Lower leg skin (tissue), 4 donors: ENCODE measurements at regions of chr9 and their contacts with region 1.

Region 1: DNA sequence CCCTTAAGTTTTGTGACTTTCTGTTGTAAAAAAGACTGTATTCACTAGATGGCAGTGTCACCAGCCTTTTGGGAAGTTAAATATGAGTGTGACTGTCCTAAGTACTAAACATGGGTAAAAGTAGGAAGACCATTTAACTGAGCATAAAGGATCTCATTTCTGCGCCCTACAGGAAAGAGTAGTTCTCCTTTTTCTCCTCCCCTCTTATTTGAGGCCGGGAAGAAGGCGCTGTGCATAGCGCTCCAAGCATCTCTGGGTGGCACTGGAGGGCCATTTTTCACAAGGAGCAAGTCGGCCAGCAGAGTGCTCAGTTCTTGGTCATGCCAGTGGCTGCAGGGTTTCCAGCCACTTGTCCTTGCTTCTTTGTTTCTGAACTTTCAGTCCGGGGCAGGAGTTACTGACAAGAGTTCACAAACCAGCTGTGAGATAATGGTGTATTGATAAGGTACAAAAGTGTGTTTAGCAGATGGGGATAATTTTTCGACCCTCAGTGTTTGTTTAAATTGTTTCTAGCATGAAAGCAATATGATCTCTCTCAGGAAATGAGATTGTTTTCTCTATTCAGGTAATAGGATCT is 227.6 kb upstream of the DMRT1 start:
- DNase-seq: peak; percentile 73 to 93
- H3K4me3 ChIP-seq: no peak overlapping the region
- CTCF ChIP-seq: peak in 1 of 3 donors; percentile 66
- POLR2A ChIP-seq: no peak

Region 2: GRCh38 chr9:626596-626995 is 12.7 kb after region 1 on chr9:
- intact Hi-C with region 1: no loop called
- DNase-seq: no peak
- H3K4me3 ChIP-seq: no peak overlapping the region
- CTCF ChIP-seq: no peak
- POLR2A ChIP-seq: no peak

Region 3: GRCh38 chr9:763692-764524 is 150.0 kb after region 1 on chr9:
- intact Hi-C with region 1: loop called (anchors 5 kb)
- DNase-seq: peak; percentile 62 to 91
- H3K4me3 ChIP-seq: no peak overlapping the region
- CTCF ChIP-seq: peak in 1 of 3 donors; percentile 80
- POLR2A ChIP-seq: no peak

Region 4: DNA sequence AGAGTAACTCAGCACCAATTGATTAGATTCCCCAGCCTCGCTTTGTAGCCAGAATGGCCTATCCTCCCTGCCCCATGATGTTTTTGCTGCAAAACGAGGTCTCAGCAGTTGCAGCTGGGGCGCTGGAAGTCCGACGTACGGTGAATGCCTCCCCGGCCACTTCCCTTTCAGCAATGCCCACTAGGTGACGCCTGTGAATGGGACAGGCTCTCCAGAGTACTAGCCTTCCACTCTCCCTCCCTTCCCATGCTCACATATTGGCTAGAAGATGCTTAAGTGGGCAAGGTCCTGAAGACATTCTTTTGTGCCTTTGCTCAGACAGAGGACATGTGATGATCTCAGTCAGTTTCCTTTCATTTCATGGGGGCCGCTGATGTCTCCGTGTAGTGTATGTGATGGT is 487.1 kb after region 1 on chr9:
- intact Hi-C with region 1: no loop called
- DNase-seq: no peak
- H3K4me3 ChIP-seq: no peak overlapping the region
- CTCF ChIP-seq: no peak
- POLR2A ChIP-seq: no peak